K562 (cell line): ENCODE measurements at regions of chr22 and their contacts with region 1.

Region 1: GRCh38 chr22:47626428-47627390 is 864.3 kb downstream of the TBC1D22A start:
- DNase-seq: peak in 3 of 4 experiments; percentile 19 to 39 (median 32)
- ATAC-seq: peak; percentile 57
- H3K4me3 ChIP-seq: no peak overlapping the region
- H3K27ac ChIP-seq: no peak overlapping the region
- H3K4me1 ChIP-seq: peaks cover 0 to 8% of the 10 kb centered on the region in 2 experiments; a peak in 3 of 5 replicates
- H3K27me3 ChIP-seq: peaks cover 22 to 46% of the 10 kb centered on the region in 2 experiments; a peak in 4 of 5 replicates
- CTCF ChIP-seq: peak; percentile 45 to 63 (median 49); a peak in 5 of 6 replicates
- EP300 ChIP-seq: no peak
- POLR2A ChIP-seq: no peak
- RAD21 ChIP-seq: peak in 1 of 2 experiments; percentile 71; a peak in 3 of 4 replicates

Region 2: GRCh38 chr22:47776329-47776728 is 149.6 kb after region 1 on chr22:
- CTCF ChIA-PET with region 1: no interaction called
- POLR2A ChIA-PET with region 1: interaction called, 3 read pairs
- in situ Hi-C with region 1: no loop called
- intact Hi-C with region 1: loop called (anchors 10 kb)
- DNase-seq: peak in 1 of 4 experiments; percentile 12
- ATAC-seq: peak; percentile 71
- H3K4me3 ChIP-seq: no peak overlapping the region
- H3K27ac ChIP-seq: no peak overlapping the region
- H3K4me1 ChIP-seq: peaks cover 9 to 14% of the 10 kb centered on the region in 2 experiments; a peak in 4 of 5 replicates
- H3K27me3 ChIP-seq: no peaks in the 10 kb centered on the region
- CTCF ChIP-seq: peak in 2 of 3 experiments; percentile 20 to 30; a peak in 2 of 6 replicates
- EP300 ChIP-seq: no peak
- POLR2A ChIP-seq: no peak
- RAD21 ChIP-seq: no peak

Region 3: GRCh38 chr22:47837703-47838102 is 211.0 kb after region 1 on chr22:
- CTCF ChIA-PET with region 1: no interaction called
- POLR2A ChIA-PET with region 1: no interaction called
- in situ Hi-C with region 1: loop called (anchors 10 kb)
- intact Hi-C with region 1: loop called (anchors 5 kb)
- DNase-seq: peak; percentile 26 to 59 (median 34)
- ATAC-seq: peak; percentile 77
- H3K4me3 ChIP-seq: no peak overlapping the region
- H3K27ac ChIP-seq: no peak overlapping the region
- H3K4me1 ChIP-seq: no peaks in the 10 kb centered on the region
- H3K27me3 ChIP-seq: no peaks in the 10 kb centered on the region
- CTCF ChIP-seq: peak; percentile 60 to 72 (median 64)
- EP300 ChIP-seq: no peak
- POLR2A ChIP-seq: no peak
- RAD21 ChIP-seq: peak; percentile 48 to 78